Motor neuron (in vitro differentiated cells): ENCODE measurements at regions of chr1 and their contacts with region 1.

Region 1: GRCh38 chr1:21368515-21369289 is 71.2 kb upstream of the NBPF3 start:
- ATAC-seq: peak; percentile 84 to 98 (median 88)
- H3K4me3 ChIP-seq: no peak overlapping the region
- H3K27ac ChIP-seq: no peak overlapping the region
- H3K4me1 ChIP-seq: no peaks in the 10 kb centered on the region

Region 2: DNA sequence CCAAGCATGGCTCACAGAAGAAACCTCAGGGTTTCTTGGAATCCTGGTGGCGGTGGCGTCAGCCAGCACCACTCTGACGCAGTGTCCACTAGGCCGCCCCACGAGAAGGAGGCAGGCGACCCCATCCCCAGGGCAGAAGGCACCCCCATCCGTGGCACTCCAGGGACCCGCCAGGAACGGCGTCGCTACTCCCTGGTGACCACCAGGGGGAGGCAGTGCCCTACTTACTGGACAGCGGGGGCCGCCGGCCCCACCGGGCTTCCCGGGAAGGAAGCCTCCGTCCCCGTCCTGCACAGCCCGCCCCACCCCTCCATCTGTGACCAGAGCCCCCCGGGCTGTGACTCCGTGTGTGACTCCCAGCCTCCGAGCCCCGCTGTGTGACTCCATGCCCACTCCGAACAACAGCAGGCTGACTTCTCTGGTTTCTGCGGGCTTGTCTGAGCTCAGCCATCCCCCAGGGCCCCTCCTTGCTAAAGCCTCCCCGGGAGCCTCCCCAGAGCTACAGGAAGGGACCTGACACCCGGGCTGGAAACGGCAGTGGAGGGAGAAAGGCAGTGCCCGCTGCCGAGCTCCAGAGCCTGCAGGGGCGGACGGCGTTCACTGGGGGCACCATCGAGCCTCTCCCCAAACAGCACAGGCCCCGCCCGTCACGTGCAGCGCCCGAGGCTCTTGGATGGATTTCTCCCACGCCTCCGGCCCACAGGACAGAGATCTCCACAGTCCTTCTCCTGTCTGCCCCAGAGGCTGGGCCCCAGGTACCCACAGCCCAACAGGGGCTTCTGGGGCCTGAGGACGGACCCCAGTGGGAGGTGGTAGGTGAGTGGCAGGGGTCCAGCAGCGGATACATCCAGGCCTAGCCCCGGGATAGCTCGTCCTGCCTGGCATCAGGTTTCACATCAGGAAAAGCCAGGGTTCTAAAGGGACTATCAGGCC is 672.0 kb before region 1 on chr1:
- in situ Hi-C with region 1: loop called in 1 of 9 experiments (anchors 25 kb)
- ATAC-seq: peak; percentile 92 to 95 (median 94)
- H3K4me3 ChIP-seq: peak overlapping the region; percentile 30 to 42 (median 38)
- H3K27ac ChIP-seq: peak overlapping the region; percentile 76 to 83
- H3K4me1 ChIP-seq: peaks cover 8% of the 10 kb centered on the region in 2 donors

Region 3: GRCh38 chr1:21232044-21232443 is 136.7 kb before region 1 on chr1:
- in situ Hi-C with region 1: loop called in 2 of 9 experiments (anchors 10 kb)
- ATAC-seq: peak; percentile 44 to 84 (median 52)
- H3K4me3 ChIP-seq: no peak overlapping the region
- H3K27ac ChIP-seq: no peak overlapping the region
- H3K4me1 ChIP-seq: peaks cover 0 to 1% of the 10 kb centered on the region in 2 donors

Region 4: DNA sequence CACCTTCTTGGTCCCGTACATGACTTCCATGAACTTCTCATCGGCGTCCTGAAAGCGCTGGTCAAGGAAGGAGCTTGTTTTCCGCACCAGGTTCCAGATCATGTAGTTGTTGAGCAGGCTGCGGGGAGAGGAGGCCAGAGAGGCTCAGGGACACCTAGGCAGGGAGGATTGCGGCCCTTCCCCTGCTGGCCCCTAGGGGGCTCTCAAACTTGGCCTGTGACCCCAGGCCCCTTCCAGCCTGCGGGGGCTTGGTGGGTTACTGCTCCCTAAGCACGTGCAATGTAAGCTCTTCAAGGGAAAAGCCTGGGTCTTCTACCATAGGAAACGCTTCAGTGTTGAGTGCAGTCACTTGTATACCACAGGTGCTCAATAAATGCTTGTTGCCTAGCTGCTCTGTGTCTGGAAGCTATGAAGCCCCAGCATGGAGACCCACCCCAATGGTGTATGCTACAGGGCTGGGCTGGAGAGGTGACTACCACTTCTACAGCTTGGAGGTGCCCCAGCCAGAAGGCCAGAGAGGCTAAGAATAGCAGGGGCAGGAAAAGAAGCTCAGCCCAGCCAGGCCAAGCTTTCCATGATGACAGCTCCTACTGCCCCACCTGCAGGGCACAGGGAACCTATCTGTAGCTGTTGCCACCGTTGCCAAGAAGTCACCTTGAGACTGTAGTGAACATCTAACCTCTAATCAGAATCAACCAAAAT is 123.6 kb before region 1 on chr1:
- in situ Hi-C with region 1: loop called in 8 of 9 experiments (anchors 10 kb)
- ATAC-seq: no peak
- H3K4me3 ChIP-seq: no peak overlapping the region
- H3K27ac ChIP-seq: no peak overlapping the region
- H3K4me1 ChIP-seq: no peaks in the 10 kb centered on the region

Region 5: DNA sequence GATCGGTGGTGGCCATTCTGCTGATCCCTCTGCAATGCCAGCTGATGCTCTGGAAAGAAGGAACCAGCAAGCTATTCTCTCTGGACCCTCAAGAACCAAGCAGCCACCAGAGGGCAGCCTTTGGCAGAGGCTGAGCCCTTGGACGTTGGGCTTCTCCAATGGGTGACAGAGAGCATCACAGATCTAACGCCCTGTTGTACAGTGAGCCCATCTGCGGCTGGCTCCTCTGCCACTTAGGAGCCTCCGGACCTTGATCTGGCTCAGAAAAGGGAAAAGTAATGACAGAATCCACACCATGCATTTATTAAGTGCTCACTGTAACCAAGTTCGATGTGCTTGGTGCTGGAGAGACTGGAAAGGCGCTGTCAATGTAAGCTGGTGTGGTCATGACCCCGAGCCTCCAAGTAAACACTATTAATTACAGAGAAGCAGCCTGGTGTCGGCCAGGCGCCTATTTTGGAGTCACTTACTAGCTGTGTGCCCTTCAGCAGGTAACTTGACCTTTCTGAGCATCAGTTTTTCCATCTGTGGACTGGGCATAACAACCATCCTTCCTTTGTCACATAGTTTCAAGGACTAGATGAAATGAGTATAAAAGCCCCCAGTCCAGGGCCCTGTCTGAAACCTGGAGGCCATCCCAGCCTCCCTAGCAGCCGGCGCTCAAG is 113.3 kb before region 1 on chr1:
- in situ Hi-C with region 1: loop called in 7 of 9 experiments (anchors 10 kb)
- ATAC-seq: peak; percentile 79 to 99 (median 97)
- H3K4me3 ChIP-seq: no peak overlapping the region
- H3K27ac ChIP-seq: no peak overlapping the region
- H3K4me1 ChIP-seq: peaks cover 0 to 5% of the 10 kb centered on the region in 2 donors

Region 6: DNA sequence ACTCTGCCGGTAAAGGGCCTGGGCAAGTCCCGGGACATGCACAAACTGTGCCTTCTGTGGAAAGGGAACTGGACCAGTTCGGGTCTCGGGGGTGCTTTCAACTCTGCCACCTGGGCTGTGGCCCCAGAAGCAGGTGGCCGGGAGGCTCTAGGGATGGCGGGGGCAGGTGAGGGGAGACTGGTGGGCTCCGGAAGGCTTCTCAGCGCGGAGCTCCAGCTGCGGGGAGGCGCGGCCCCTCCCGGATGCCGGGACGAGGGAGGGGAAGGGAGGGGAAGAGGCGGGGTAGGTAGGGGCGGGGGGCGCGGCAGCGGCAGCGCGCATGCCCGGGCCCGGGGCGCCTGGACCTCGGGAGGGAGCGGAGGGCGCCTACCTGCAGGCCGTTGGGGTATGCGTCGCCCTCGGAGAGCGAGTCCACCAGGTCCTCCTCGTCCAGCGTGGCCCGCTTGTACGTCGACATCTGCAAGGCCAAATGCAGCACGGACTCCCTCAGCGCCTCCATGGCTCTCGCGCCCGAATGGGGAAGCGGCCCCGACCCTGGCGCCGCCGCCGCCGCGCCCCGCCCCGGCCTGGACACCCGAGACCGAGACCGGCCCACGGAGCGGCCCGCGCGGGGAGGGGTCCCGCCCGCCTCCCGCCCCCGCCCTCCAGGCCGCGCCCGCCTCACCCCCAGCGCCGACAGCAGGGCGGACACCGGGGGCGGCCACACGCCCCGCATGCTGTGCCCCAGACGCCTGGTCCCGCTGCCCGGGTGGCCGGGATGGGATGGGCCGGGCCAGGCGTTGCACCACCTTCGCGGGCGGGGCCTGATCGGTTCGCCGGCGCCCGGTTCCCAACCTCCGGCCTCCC is 78.8 kb before region 1 on chr1 and contains the start of gene ECE1:
- in situ Hi-C with region 1: no loop called
- ATAC-seq: peak; percentile 55 to 88 (median 84)
- H3K4me3 ChIP-seq: peak within 1 kb of the TSS; percentile 35 to 73 (median 59)
- H3K27ac ChIP-seq: peak within 1 kb of the TSS in 1 of 2 donors; percentile 45
- H3K4me1 ChIP-seq: peaks cover 15 to 34% of the 10 kb centered on the region in 2 donors
- total RNA-seq, gene ECE1: 5.3 to 49.7 (median 24.3) TPM

Region 7: GRCh38 chr1:21490774-21491553 is 122.3 kb after region 1 on chr1:
- in situ Hi-C with region 1: no loop called
- ATAC-seq: peak in 6 of 8 experiments; percentile 39 to 94 (median 84)
- H3K4me3 ChIP-seq: no peak overlapping the region
- H3K27ac ChIP-seq: no peak overlapping the region
- H3K4me1 ChIP-seq: peaks cover 0 to 10% of the 10 kb centered on the region in 2 donors

Region 8: GRCh38 chr1:21573971-21574465 is 205.3 kb after region 1 on chr1:
- in situ Hi-C with region 1: loop called in 1 of 9 experiments (anchors 25 kb)
- ATAC-seq: peak; percentile 67 to 93 (median 76)
- H3K4me3 ChIP-seq: no peak overlapping the region
- H3K27ac ChIP-seq: no peak overlapping the region
- H3K4me1 ChIP-seq: peaks cover 15 to 18% of the 10 kb centered on the region in 2 donors

Region 9: DNA sequence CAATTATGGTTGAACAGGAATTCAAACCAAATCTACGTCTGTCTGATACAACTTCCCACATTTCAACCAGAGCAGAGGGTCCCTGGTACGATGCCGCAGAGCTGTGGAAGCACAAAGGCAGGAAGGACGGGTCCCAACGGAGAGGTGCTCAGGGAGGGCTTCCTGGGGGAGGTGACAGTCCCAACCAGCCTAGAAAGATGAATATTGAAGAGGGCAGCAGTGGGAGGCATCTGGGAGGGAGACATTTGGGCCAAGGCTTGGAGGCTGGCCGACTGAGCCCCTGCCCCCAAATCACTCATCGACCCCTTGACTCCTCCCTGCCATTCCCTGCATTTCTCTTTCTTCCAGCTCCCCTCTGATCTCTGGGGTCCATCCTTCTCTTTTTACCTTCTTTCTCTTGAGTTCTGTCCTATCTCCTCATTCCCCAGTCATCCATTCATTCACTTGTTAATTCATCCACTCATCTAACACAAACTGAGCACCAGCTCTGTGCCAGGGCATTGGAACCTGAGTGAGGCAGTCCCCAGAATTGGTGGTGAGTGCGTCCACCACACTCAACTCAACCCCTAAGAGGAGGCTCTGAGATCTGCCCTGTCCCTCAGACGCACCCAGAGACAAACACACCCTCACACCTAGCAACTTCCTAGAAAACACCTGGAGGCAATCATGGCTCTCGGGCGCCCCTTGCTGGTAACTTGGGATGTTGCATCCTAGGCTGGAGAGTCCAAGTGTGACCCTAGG is 594.9 kb after region 1 on chr1:
- in situ Hi-C with region 1: loop called in 2 of 9 experiments (anchors 25 kb)
- ATAC-seq: peak; percentile 82 to 95 (median 88)
- H3K4me3 ChIP-seq: no peak overlapping the region
- H3K27ac ChIP-seq: no peak overlapping the region
- H3K4me1 ChIP-seq: no peaks in the 10 kb centered on the region